Left ventricle myocardium superior (tissue), 1 donor: ENCODE measurements at regions of chr3 and their contacts with region 1.

Region 1: DNA sequence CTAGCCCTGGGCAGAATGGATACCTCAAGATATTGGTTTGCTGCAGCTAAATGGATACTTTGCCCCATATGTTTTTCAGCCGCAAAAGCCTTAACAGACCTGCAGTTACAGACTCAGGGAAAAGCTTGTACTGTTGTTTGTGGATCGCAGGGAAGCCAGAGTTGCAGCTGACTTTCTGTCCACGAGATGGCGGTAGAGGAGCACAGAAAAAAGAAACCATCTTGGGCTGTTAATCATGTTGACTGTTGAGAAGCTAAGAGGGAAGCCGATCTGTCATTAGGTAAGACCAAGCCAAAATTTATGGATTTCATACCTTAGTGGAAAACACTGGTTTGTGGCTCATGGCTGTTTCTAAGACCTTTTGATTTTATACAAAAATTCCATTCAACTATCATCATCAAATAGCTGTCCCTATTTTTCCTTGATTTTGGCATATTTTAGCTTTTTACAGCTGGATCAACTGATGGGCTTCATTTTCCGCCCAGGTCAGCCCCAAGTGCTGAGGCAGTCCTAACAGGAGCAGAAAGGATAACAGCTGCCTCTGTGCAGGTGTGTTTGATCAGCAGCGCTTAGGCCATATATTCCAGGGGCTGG is 205.7 kb upstream of the ZPLD1 start:
- DNase-seq: peak; percentile 61
- ATAC-seq: peak; percentile 76

Region 2: GRCh38 chr3:101813817-101814440 is 415.2 kb before region 1 on chr3:
- intact Hi-C with region 1: loop called (anchors 2 kb)
- DNase-seq: no peak
- ATAC-seq: peak; percentile 22

Region 3: DNA sequence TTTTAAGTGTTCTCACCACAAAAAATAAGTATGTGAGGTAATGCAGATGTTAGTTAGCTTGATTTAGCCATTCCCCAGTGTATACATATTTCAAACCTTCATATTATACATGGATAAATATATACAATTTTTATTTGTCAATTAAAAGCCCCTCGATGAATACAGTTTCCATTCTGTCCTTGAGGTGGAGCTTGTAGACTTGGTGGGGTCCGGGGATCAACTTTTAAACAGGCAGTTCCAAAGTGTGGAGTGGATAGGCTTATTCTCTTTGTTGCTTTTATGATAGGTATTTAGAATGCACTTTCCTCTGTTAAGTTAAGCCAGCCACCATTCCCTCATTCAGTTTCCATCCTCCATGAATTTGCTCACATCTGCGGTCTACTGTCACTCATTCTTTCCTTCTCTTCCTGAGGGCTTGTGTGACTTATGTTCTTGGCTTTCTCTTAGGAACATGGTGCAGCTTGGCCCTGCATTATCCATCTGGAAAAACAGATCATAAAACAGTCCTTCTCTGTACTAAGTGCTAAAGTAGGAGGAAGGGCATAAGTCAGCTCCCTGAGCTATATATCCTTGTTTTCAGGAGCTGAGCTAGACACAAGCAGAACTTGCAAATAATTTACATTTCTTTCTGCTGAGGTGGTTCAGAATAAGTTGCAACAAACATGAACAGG is 230.8 kb before region 1 on chr3:
- intact Hi-C with region 1: no loop called
- DNase-seq: no peak
- ATAC-seq: no peak

Region 4: GRCh38 chr3:102536456-102536855 is 307.3 kb after region 1 on chr3:
- intact Hi-C with region 1: loop called (anchors 2 kb)
- DNase-seq: no peak
- ATAC-seq: no peak